Activated naive CD4-positive, alpha-beta T cell treated with anti-CD3 and anti-CD28 coated beads for 36 hours (primary cell): ENCODE measurements at regions of chr6 and their contacts with region 1.

Region 1: DNA sequence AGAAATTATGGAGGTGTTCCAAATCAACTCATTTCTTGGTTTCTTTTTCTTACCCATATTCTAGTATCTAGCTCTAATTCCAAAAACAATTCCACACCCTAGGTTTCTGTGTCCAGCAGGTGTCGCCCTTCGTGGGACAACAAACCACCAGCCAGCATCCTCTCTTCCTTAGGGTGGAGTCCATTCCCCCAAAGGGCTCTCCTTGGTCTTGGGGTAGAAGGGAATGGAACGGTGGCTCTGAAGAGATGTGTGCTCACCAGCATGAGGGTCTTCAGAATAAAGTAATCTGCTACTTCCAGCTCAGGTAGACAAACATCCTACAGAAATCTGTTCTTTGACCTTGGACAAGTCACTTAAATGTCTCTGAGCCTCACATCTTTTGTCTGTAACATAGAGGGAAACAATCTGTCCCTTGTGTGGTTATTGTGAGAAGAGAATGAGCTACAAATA is 7.2 kb downstream of the HLA-DMB start:
- DNase-seq: peak; percentile 90
- H3K4me3 Mint-ChIP-seq: no peak overlapping the region
- H3K27ac Mint-ChIP-seq: no peak overlapping the region
- H3K4me1 Mint-ChIP-seq: no peaks in the 10 kb centered on the region
- H3K27me3 Mint-ChIP-seq: no peaks in the 10 kb centered on the region

Region 2: GRCh38 chr6:32853541-32854375 is 79.9 kb before region 1 on chr6 and contains the starts of genes PSMB9 and TAP1:
- CTCF ChIA-PET with region 1: no interaction called
- intact Hi-C with region 1: no loop called
- DNase-seq: peak; percentile 98
- H3K4me3 Mint-ChIP-seq: peak within 1 kb of the TSS; percentile 100
- H3K27ac Mint-ChIP-seq: peak within 1 kb of the TSS; percentile 100
- H3K4me1 Mint-ChIP-seq: peaks cover 67% of the 10 kb centered on the region
- H3K27me3 Mint-ChIP-seq: no peaks in the 10 kb centered on the region
- total RNA-seq, gene PSMB9: 238 to 241 TPM
- total RNA-seq, gene TAP1: 187 TPM

Region 3: DNA sequence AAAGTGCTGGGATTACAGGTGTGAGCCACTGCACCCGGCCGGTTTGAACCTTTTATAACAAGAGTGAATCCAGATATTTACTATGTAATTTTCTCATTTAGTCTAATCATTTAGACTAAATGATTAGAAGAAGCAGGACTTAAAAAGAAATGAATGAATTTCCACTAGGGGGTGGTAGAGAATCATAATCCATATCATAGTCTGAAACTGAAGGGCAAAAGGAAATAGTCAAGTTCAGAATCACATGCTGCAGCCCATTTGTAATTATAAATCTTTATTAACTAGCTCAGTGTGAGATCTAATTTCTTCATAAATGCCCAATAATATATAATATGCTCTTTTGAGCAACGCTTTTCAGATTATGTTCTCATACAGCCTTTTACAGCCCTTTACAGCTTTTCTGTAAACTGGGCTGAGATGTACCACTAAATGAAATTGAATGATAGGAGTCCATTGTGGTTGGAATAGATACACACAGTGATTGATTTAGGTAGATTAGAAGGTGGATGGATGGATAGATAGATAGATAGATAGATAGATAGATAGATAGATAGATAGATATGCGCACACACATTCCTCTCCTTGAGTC is 47.9 kb before region 1 on chr6:
- CTCF ChIA-PET with region 1: interaction called, 12 read pairs
- intact Hi-C with region 1: no loop called
- DNase-seq: no peak
- H3K4me3 Mint-ChIP-seq: no peak overlapping the region
- H3K27ac Mint-ChIP-seq: no peak overlapping the region
- H3K4me1 Mint-ChIP-seq: peaks cover 9% of the 10 kb centered on the region
- H3K27me3 Mint-ChIP-seq: no peaks in the 10 kb centered on the region

Region 4: GRCh38 chr6:32894080-32895005 is 39.3 kb before region 1 on chr6:
- CTCF ChIA-PET with region 1: interaction called, 12 read pairs
- intact Hi-C with region 1: no loop called
- DNase-seq: peak; percentile 97
- H3K4me3 Mint-ChIP-seq: peak overlapping the region; percentile 97
- H3K27ac Mint-ChIP-seq: peak overlapping the region; percentile 96
- H3K4me1 Mint-ChIP-seq: peaks cover 37% of the 10 kb centered on the region
- H3K27me3 Mint-ChIP-seq: no peaks in the 10 kb centered on the region

Region 5: DNA sequence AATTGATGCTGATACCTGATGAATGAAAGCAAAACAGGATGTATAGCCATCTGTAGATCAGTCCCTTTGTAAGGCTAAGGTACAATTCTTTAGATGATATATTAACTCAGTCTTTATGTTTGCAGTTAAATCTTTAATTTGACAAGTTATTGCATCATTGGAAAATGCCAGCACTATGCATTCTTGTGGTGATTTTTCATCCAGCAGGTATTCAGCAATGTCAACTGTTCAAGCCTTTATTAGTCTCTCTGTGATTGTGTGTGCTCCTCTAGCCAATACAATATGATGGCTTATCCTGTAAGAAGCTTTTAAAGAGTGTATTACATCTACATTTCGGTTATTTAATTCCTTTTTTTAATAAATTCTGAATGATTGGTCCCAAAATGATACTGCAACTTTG is 27.1 kb before region 1 on chr6:
- CTCF ChIA-PET with region 1: interaction called, 7 read pairs
- intact Hi-C with region 1: loop called (anchors 2 kb)
- DNase-seq: no peak
- H3K4me3 Mint-ChIP-seq: no peak overlapping the region
- H3K27ac Mint-ChIP-seq: no peak overlapping the region
- H3K4me1 Mint-ChIP-seq: no peaks in the 10 kb centered on the region
- H3K27me3 Mint-ChIP-seq: peaks cover 2% of the 10 kb centered on the region

Region 6: GRCh38 chr6:32947552-32948465 is 14.1 kb after region 1 on chr6:
- CTCF ChIA-PET with region 1: interaction called, 148 read pairs
- intact Hi-C with region 1: loop called (anchors 1 kb)
- DNase-seq: peak; percentile 70
- H3K4me3 Mint-ChIP-seq: no peak overlapping the region
- H3K27ac Mint-ChIP-seq: no peak overlapping the region
- H3K4me1 Mint-ChIP-seq: peaks cover 52% of the 10 kb centered on the region
- H3K27me3 Mint-ChIP-seq: no peaks in the 10 kb centered on the region

Region 7: GRCh38 chr6:32952817-32953739 is 19.4 kb after region 1 on chr6 and contains the start of gene HLA-DMA:
- CTCF ChIA-PET with region 1: interaction called, 148 read pairs
- intact Hi-C with region 1: loop called (anchors 1 kb)
- DNase-seq: peak; percentile 87
- H3K4me3 Mint-ChIP-seq: peak within 1 kb of the TSS; percentile 73
- H3K27ac Mint-ChIP-seq: peak within 1 kb of the TSS; percentile 60
- H3K4me1 Mint-ChIP-seq: peaks cover 47% of the 10 kb centered on the region
- H3K27me3 Mint-ChIP-seq: no peaks in the 10 kb centered on the region
- total RNA-seq, gene HLA-DMA: 12.7 to 14.5 TPM

Region 8: DNA sequence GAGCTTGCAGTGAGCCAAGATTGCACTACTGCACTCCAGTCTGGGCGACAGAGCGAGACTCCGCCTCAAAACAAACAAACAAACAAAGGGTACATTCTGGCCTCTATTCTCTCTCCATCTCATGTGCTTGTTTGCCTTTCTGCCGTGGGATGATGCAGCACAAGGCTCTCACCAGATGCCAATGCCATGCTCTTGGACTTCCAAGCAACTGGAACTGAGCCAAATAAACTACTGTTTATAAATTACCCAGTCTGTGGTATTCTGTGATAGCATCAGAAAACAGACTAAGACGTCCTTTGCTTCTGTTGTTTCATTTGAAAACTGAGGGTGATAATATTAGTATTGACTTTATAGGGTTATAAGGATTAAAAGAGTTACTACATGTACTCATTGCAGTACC is 31.1 kb after region 1 on chr6:
- CTCF ChIA-PET with region 1: interaction called, 90 read pairs
- intact Hi-C with region 1: loop called (anchors 1 kb)
- DNase-seq: no peak
- H3K4me3 Mint-ChIP-seq: no peak overlapping the region
- H3K27ac Mint-ChIP-seq: no peak overlapping the region
- H3K4me1 Mint-ChIP-seq: peaks cover 48% of the 10 kb centered on the region
- H3K27me3 Mint-ChIP-seq: no peaks in the 10 kb centered on the region

Region 9: DNA sequence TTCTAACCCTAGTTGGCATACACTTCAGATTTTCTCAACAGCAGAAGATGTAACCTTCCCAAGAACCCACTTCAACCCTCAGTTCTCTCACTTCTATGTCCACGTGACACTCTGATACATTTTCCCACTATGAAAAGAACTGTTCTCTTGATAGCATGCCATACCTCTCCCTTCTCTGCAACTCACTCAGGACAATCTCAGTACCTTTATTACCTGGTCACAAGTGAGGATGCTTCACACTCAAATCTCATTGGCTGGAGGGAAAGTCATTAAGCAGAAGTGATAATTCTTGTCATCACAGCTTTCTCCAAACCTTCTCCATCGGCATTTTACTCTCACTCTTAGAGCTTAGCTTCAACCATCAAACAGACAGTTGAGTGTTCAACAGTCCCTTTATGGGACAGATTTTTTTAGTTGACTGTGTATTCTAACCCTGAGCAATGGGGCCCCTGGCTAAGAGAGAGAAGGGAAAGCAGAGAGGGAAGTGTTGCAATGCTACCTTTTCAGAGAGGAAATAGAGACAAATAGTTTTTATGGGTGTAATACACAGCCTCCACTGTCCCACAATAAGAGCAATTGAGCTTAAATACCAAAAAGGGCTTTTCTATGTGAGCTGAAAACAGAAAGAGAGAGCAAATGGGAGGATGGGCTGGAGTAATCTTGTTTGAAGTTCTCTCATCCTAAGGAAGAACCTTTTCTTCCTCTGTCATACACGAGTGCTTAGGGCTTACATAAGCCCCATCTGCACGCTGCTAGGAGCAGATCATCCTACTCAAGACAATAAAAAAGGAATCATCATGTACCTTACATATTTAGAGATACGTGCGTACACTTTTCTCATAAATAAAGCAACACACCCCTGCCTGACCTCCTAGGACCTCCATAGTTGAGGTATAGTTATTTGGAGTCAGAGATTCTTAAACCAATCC is 123.8 kb after region 1 on chr6:
- CTCF ChIA-PET with region 1: no interaction called
- intact Hi-C with region 1: no loop called
- DNase-seq: no peak
- H3K4me3 Mint-ChIP-seq: no peak overlapping the region
- H3K27ac Mint-ChIP-seq: no peak overlapping the region
- H3K4me1 Mint-ChIP-seq: no peaks in the 10 kb centered on the region
- H3K27me3 Mint-ChIP-seq: no peaks in the 10 kb centered on the region

Region 10: GRCh38 chr6:33161354-33162331 is 228.0 kb after region 1 on chr6:
- CTCF ChIA-PET with region 1: no interaction called
- intact Hi-C with region 1: no loop called
- DNase-seq: peak; percentile 85
- H3K4me3 Mint-ChIP-seq: peak overlapping the region; percentile 78
- H3K27ac Mint-ChIP-seq: no peak overlapping the region
- H3K4me1 Mint-ChIP-seq: peaks cover 12% of the 10 kb centered on the region
- H3K27me3 Mint-ChIP-seq: no peaks in the 10 kb centered on the region